GM10248 (cell line): ENCODE measurements at regions of chr12 and their contacts with region 1.

Region 1: GRCh38 chr12:55940065-55940732 is 9.2 kb downstream of the DGKA start:
- DNase-seq: peak; percentile 86
- CTCF ChIP-seq: peak; percentile 89

Region 2: GRCh38 chr12:55780685-55781084 is 159.5 kb before region 1 on chr12:
- CTCF ChIA-PET with region 1: interaction called, 11 read pairs
- POLR2A ChIA-PET with region 1: no interaction called
- DNase-seq: no peak
- CTCF ChIP-seq: no peak

Region 3: GRCh38 chr12:55806982-55807381 is 133.2 kb before region 1 on chr12:
- CTCF ChIA-PET with region 1: interaction called, 10 read pairs
- POLR2A ChIA-PET with region 1: no interaction called
- DNase-seq: no peak
- CTCF ChIP-seq: no peak

Region 4: GRCh38 chr12:55817346-55818139 is 122.7 kb before region 1 on chr12 and contains the starts of genes ORMDL2 and SARNP:
- CTCF ChIA-PET with region 1: interaction called, 20 read pairs
- POLR2A ChIA-PET with region 1: no interaction called
- DNase-seq: peak; percentile 97
- CTCF ChIP-seq: no peak

Region 5: DNA sequence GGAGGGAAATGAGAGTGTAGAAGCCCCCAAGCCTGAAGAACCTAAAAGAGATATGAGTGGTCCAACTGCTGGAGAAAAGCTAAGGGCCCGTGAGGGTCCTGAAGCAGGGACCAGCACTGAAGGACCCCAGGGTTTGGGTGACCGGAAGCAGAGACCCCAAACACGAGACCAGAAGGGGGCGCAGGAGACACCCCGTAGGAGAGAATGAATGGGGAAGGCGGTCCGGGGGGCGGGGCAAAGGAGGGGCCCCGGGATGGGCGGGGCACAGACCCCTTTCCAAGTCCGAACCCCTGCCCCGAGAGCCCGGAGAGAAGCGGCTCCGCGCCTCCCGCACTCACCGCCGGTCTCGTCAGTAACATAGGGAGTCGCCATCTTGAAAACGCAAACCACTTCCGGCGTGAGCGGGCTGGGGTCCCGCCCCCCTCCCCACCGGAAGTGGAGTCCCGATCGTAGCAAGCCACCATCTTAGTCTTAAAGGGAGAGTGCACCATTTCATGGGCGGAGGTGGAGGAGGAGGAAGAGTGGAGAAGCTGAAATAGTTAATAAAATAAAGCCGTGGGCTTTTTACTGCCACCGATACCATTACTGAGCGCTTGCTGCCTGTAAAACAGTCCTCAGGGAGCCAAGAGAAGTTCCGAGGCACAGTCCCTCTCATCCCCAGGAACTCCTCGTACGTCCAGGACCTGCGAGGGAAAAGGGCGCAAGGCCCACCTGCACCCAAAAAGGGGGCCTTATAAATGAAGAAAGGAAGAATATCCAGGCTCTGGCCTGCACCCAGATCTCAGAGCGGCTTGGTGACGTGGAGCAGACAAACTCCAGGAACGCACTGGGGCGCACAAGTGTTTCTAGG is 13.2 kb before region 1 on chr12:
- CTCF ChIA-PET with region 1: interaction called, 92 read pairs
- POLR2A ChIA-PET with region 1: no interaction called
- DNase-seq: peak; percentile 91
- CTCF ChIP-seq: peak; percentile 72

Region 6: GRCh38 chr12:55955800-55956508 is 15.8 kb after region 1 on chr12:
- CTCF ChIA-PET with region 1: interaction called, 41 read pairs
- POLR2A ChIA-PET with region 1: no interaction called
- DNase-seq: no peak
- CTCF ChIP-seq: no peak

Region 7: DNA sequence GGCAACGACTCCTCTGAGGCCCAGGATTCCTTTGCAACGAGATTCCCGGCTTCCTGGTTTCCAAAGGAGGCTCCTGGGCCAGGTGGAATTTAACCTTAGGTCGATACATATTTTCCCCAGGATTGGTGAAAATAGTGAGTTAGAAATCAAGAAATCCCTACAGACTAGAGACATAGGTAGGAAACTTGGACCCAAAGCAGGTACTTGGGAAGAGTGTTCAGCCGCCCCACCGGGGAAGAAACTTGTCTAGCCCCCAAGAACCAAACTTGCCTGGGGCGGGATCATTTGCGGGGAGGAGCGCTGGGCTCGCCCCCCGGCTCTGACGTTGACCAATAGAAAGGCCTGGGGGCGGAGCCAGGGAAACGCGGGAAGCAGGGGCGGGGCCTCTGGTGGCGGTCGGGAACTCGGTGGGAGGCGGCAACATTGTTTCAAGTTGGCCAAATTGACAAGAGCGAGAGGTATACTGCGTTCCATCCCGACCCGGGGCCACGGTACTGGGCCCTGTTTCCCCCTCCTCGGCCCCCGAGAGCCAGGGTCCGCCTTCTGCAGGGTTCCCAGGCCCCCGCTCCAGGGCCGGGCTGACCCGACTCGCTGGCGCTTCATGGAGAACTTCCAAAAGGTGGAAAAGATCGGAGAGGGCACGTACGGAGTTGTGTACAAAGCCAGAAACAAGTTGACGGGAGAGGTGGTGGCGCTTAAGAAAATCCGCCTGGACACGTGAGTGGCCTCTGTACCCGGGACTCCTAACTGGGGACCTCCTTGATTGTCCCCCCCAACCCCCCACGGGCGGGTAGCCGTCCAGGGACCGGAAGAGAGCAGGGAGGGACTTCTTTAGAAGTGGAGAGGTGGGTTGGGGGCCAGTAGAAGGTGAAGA is 26.4 kb after region 1 on chr12 and contains the start of gene CDK2:
- CTCF ChIA-PET with region 1: interaction called, 16 read pairs
- POLR2A ChIA-PET with region 1: no interaction called
- DNase-seq: peak; percentile 94
- CTCF ChIP-seq: no peak